Right cardiac atrium (tissue), 5 donors: ENCODE measurements at regions of chr10 and their contacts with region 1.

Region 1: DNA sequence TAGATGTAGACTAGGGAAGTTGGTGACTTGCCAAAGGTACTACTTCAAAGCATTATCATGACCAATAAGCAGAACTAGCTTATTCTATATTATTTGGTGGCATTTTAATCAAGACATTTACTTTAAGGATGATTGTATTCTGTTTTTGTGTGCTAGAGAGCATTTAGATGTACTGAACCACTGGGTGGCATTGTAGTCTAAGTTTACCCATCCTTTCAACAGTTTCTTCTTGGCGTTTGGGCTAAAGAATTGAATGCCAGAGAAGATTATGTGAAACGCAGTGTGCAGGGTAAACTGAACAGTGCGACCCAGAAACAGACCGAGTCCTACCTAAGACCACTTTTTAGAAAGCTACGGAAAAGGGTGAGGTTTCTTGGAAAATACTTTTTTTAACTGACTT is 26.8 kb downstream of the PRPF18 start:
- DNase-seq: no peak
- ATAC-seq: peak; percentile 79 to 81
- H3K4me3 ChIP-seq: no peak overlapping the region
- H3K27ac ChIP-seq: no peak overlapping the region
- H3K4me1 ChIP-seq: no peaks in the 10 kb centered on the region
- H3K27me3 ChIP-seq: no peaks in the 10 kb centered on the region

Region 2: GRCh38 chr10:13503745-13504463 is 109.6 kb before region 1 on chr10:
- intact Hi-C with region 1: no loop called
- DNase-seq: no peak
- ATAC-seq: no peak
- H3K4me3 ChIP-seq: no peak overlapping the region
- H3K27ac ChIP-seq: no peak overlapping the region
- H3K4me1 ChIP-seq: peaks cover 5% of the 10 kb centered on the region
- H3K27me3 ChIP-seq: no peaks in the 10 kb centered on the region

Region 3: DNA sequence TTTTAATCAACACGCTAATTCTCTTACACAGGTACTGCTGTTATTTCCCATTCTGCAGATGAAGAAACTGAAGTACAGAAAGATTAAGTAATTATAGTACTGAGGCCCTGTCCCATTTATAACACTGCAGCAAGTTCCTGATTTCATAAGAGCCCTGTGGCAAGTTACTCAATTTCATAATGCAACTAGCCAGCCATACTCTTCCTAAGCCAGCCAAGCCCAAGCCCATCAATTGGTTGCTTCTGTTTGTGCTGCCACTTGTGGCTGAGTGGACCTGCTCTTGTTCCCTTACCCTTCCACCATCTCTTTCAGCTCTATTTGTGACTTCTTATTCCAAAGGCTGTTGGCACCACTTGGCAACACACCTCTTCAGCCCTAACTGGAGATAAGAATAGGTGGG is 46.5 kb before region 1 on chr10:
- intact Hi-C with region 1: no loop called
- DNase-seq: no peak
- ATAC-seq: peak in 1 of 2 donors; percentile 45
- H3K4me3 ChIP-seq: no peak overlapping the region
- H3K27ac ChIP-seq: no peak overlapping the region
- H3K4me1 ChIP-seq: no peaks in the 10 kb centered on the region
- H3K27me3 ChIP-seq: no peaks in the 10 kb centered on the region

Region 4: GRCh38 chr10:13769955-13770354 is 156.4 kb after region 1 on chr10:
- intact Hi-C with region 1: loop called (anchors 5 to 10 kb)
- DNase-seq: no peak
- ATAC-seq: no peak
- H3K4me3 ChIP-seq: no peak overlapping the region
- H3K27ac ChIP-seq: no peak overlapping the region
- H3K4me1 ChIP-seq: peaks cover 6% of the 10 kb centered on the region
- H3K27me3 ChIP-seq: no peaks in the 10 kb centered on the region

Region 5: DNA sequence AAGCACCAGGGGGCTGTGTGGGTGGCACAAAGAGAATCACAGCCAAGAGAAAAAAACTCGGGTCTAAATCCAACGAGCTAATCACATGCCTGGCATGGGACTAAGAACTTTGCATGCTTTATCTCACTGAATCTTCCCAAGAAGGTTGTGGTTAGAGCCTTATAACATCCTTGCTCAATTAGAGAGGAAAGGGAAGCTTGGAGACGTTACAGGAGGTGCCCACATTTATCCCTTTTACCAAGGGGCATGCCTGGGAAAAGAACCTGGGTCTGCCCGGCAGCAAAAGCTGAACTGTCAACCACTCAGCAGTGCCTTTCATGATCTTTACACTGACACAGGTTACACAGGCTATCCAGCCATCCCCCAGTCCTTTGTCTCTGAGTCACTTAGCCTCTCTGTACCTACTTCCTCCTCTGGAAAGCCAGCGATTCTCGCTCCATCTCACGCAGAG is 163.4 kb after region 1 on chr10:
- intact Hi-C with region 1: loop called (anchors 5 to 10 kb)
- DNase-seq: no peak
- ATAC-seq: no peak
- H3K4me3 ChIP-seq: no peak overlapping the region
- H3K27ac ChIP-seq: no peak overlapping the region
- H3K4me1 ChIP-seq: peaks cover 8% of the 10 kb centered on the region
- H3K27me3 ChIP-seq: no peaks in the 10 kb centered on the region